ENCODE measurements at regions of chr4 and their contacts with region 1.

Region 1: GRCh38 chr4:175034986-175035705 is 117.0 kb downstream of the ADAM29 start:
- DNase-seq: no peak
- H3K4me3 ChIP-seq: no peak overlapping the region
- H3K27ac ChIP-seq: no peak overlapping the region
- H3K4me1 ChIP-seq: peaks cover 4% of the 10 kb centered on the region
- CTCF ChIP-seq: no peak

Region 2: GRCh38 chr4:175048906-175049305 is 13.8 kb after region 1 on chr4:
- CTCF ChIA-PET with region 1: no interaction called
- POLR2A ChIA-PET with region 1: interaction called, 13 read pairs
- intact Hi-C with region 1: no loop called
- DNase-seq: no peak
- H3K4me3 ChIP-seq: no peak overlapping the region
- H3K27ac ChIP-seq: no peak overlapping the region
- H3K4me1 ChIP-seq: no peaks in the 10 kb centered on the region
- CTCF ChIP-seq: no peak

Region 3: DNA sequence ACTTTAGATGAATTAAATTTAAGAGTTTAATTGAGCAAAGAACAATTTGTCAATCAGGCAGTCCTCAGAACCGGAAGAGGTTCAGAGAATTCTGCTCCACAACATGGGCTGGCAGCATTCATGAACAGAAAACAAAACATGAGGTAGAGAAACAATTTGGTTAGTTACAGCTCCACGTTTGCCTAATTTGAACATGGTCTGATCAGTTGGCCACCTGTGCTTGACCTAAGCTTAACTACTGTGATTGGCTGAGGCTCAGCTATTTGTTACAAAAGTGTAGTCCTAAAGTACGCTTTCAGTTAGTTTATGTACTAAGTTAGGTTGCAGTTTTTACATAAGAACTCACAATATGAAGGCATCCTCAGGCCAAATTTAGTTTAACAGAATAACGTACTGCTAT is 141.6 kb after region 1 on chr4:
- CTCF ChIA-PET with region 1: no interaction called
- POLR2A ChIA-PET with region 1: no interaction called
- intact Hi-C with region 1: no loop called
- DNase-seq: no peak
- H3K4me3 ChIP-seq: no peak overlapping the region
- H3K27ac ChIP-seq: no peak overlapping the region
- H3K4me1 ChIP-seq: peaks cover 12% of the 10 kb centered on the region
- CTCF ChIP-seq: no peak

Measured in OCI-LY7 (cell line).